Mammary epithelial cell (primary cell): ENCODE measurements at regions of chr22 and their contacts with region 1.

Region 1: GRCh38 chr22:36510966-36511881 is 4.4 kb upstream of the FOXRED2 start:
- DNase-seq: peak; percentile 21
- H3K4me3 ChIP-seq: no peak overlapping the region
- H3K27ac ChIP-seq: no peak overlapping the region
- H3K4me1 ChIP-seq: peaks cover 12% of the 10 kb centered on the region
- H3K27me3 ChIP-seq: no peaks in the 10 kb centered on the region
- CTCF ChIP-seq: peak; percentile 67 to 68

Region 2: GRCh38 chr22:36180038-36180880 is 331.0 kb before region 1 on chr22:
- CTCF ChIA-PET with region 1: no interaction called
- dilution Hi-C with region 1: loop called (anchors 5 kb)
- in situ Hi-C with region 1: no loop called
- intact Hi-C with region 1: no loop called
- DNase-seq: peak; percentile 35
- H3K4me3 ChIP-seq: no peak overlapping the region
- H3K27ac ChIP-seq: no peak overlapping the region
- H3K4me1 ChIP-seq: no peaks in the 10 kb centered on the region
- H3K27me3 ChIP-seq: peaks cover 3% of the 10 kb centered on the region
- CTCF ChIP-seq: peak; percentile 86 to 91

Region 3: DNA sequence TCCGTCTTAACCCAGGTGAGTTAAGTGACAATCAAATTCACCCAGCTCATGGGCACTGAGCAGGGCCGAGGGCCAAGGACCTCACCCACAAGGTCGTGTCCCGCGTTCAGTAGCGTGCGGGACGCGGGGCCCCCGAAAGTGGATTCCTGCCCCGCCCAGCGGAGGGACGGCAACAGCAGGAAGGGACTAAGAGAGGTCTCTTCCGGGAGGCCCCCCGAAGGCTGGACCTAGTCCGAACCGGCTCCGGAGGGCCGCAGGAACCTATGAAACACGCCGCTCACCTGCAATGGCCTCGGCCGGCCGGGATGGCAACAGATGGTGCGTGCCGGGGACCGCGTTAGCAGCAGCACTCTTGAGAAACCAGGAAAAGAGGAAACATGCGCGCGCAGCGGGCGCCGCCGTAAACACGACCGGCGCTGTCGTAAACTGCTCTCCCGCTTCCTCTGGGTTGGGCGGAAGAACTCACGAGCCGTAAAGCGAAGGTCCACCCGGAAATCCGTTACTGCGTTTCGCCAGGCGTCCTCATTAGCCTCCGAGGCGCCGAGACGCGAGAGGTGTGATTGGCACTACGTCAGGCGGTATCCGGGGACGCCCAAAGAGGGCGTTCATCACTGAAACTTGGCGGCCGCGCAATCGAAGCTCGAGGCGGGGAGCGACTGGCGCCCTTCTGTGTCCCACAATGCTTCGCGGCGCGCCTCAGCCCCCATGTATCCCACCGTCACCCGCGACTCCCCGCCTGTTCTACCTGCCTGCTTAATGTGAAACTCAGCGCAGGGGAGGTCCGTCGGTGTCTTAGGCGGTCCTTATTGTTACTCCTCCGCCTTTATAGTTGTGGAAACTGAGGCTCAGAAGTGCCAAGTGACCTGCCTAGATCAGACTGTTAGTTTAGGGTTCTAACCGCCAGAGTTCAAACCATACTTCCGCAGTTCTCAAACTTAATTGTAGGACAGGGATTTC is 17.8 kb after region 1 on chr22 and contains the start of gene EIF3D:
- CTCF ChIA-PET with region 1: no interaction called
- dilution Hi-C with region 1: no loop called
- in situ Hi-C with region 1: no loop called
- intact Hi-C with region 1: no loop called
- DNase-seq: peak; percentile 100
- H3K4me3 ChIP-seq: peak within 1 kb of the TSS; percentile 85 to 90 (median 86)
- H3K27ac ChIP-seq: peak within 1 kb of the TSS; percentile 97
- H3K4me1 ChIP-seq: peaks cover 19% of the 10 kb centered on the region
- H3K27me3 ChIP-seq: no peaks in the 10 kb centered on the region
- CTCF ChIP-seq: peak in 1 of 2 donors; percentile 0
- total RNA-seq, gene EIF3D: 210 to 354 TPM